ENCODE measurements at regions of chr17 and their contacts with region 1.

Region 1: DNA sequence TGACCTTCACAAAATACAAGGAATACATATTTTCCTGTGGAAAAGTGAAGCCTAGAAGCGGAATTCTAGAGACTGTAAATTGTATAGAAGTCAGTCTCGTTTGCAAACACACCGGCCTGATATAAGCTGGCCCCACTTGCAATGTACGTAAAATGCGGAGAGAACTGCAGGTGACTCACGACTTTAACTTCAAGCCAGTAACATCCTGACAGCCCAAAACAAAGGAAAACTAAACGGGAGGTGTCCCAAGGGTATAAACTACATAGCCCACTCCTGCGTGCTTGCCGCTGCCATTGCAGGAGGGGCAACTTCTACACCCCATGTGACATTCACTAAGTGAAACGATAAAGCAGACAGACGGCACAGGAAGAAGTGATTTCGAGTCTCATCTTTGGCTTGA is 101.6 kb downstream of the CYTH1 start:
- DNase-seq: no peak
- H3K4me3 ChIP-seq: no peak overlapping the region
- H3K27ac ChIP-seq: no peak overlapping the region
- H3K4me1 ChIP-seq: no peaks in the 10 kb centered on the region
- H3K27me3 ChIP-seq: no peaks in the 10 kb centered on the region
- CTCF ChIP-seq: no peak

Region 2: DNA sequence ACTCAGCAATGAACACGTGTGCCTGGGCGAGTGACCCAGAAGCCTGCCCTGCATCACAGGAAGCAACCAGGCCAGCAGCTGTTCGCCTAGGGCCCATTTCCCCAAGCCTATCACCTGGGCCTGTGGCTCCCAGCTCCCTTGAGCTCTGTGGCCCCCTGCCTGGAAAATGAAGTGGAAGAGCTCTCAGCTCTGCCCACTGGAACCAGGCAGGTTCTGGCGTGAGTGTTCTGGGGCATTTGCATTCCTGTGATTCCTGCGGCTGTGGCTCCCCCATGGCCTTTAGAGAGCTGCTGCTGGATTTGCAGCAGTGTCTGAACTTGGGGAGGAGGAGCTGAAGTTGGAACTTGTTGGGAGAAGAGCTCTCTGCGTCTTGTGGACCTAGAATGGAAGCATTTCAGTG is 279.2 kb before region 1 on chr17:
- CTCF ChIA-PET with region 1: no interaction called
- POLR2A ChIA-PET with region 1: interaction called, 21 read pairs
- intact Hi-C with region 1: no loop called
- DNase-seq: no peak
- H3K4me3 ChIP-seq: no peak overlapping the region
- H3K27ac ChIP-seq: no peak overlapping the region
- H3K4me1 ChIP-seq: no peaks in the 10 kb centered on the region
- H3K27me3 ChIP-seq: no peaks in the 10 kb centered on the region
- CTCF ChIP-seq: no peak

Region 3: GRCh38 chr17:78658281-78658785 is 22.1 kb before region 1 on chr17:
- CTCF ChIA-PET with region 1: no interaction called
- POLR2A ChIA-PET with region 1: no interaction called
- intact Hi-C with region 1: no loop called
- DNase-seq: no peak
- H3K4me3 ChIP-seq: no peak overlapping the region
- H3K27ac ChIP-seq: no peak overlapping the region
- H3K4me1 ChIP-seq: no peaks in the 10 kb centered on the region
- H3K27me3 ChIP-seq: no peaks in the 10 kb centered on the region
- CTCF ChIP-seq: no peak

Region 4: GRCh38 chr17:78732354-78732753 is 51.9 kb after region 1 on chr17:
- CTCF ChIA-PET with region 1: no interaction called
- POLR2A ChIA-PET with region 1: interaction called, 11 read pairs
- intact Hi-C with region 1: no loop called
- DNase-seq: no peak
- H3K4me3 ChIP-seq: no peak overlapping the region
- H3K27ac ChIP-seq: no peak overlapping the region
- H3K4me1 ChIP-seq: peaks cover 21% of the 10 kb centered on the region
- H3K27me3 ChIP-seq: no peaks in the 10 kb centered on the region
- CTCF ChIP-seq: no peak

Region 5: DNA sequence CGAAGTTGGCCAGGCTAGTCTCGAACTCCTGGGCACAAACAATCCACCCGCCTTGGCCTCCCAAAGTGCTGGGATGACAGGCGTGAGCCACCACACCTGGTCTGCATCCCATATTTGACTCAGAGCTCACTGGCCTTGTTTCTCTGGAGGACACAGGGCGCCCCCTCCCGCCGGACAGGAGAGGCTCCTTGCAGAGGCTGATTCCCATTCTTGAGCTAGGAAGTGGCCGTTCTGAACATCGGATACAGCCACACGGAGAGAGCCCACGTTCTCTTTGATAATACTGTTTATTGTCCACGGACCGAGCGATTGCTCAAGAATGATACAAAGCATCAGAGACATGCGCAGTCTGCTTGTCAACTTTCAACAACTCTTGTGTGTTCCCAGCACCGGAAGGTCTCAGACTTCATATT is 172.3 kb after region 1 on chr17:
- CTCF ChIA-PET with region 1: no interaction called
- POLR2A ChIA-PET with region 1: no interaction called
- intact Hi-C with region 1: no loop called
- DNase-seq: no peak
- H3K4me3 ChIP-seq: no peak overlapping the region
- H3K27ac ChIP-seq: no peak overlapping the region
- H3K4me1 ChIP-seq: no peaks in the 10 kb centered on the region
- H3K27me3 ChIP-seq: no peaks in the 10 kb centered on the region
- CTCF ChIP-seq: no peak

Region 6: DNA sequence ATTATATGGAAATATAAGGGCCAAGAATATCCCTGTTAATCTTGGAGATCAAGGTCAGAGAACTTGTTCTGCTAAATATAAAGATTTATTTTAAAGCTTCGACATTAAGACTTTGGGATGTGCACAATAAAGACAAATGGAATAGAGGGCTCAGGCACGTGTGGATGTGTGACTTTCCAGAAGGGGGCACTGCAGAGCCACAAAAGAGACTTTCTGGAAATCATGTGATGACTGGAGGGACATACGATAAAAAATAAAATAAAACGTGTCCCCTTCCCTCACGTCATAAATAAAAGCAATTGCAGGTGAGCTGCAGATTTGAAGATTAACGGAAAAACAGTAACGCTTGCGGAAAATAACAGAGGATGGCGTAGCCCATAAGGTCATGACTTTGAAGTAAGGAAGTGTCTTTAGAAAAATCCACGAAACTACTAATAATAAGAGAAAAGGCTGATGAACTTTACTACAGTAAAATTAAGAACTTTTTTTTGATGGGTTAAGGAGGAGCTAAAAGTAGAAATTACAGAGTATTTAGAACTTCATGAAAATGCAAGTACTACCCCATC is 384.8 kb after region 1 on chr17:
- CTCF ChIA-PET with region 1: no interaction called
- POLR2A ChIA-PET with region 1: no interaction called
- intact Hi-C with region 1: no loop called
- DNase-seq: peak; percentile 63
- H3K4me3 ChIP-seq: no peak overlapping the region
- H3K27ac ChIP-seq: no peak overlapping the region
- H3K4me1 ChIP-seq: no peaks in the 10 kb centered on the region
- H3K27me3 ChIP-seq: no peaks in the 10 kb centered on the region
- CTCF ChIP-seq: peak; percentile 75